Posterior cingulate gyrus (tissue), 11 donors: ENCODE measurements at regions of chr18 and their contacts with region 1.

Region 1: DNA sequence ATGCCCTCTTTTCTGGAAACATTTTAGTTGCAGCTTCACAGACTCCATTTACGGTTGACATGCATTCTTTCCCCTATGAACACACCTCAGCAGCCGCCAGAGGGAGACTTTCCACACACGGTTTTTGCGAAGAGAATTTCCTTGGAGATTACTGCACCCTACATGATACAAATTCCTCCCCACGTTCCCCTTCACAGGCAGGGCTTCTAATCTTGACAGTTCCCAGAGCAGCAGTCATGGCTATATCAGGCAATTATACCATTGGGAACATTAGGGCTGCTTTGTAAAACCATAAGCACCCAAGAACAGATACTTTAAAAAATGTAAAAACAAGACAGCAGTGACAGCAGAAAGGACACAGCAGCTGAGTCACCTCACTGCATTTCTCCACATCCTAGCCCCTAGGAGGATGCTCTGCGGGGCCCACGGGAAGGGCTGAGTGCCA is 253.8 kb downstream of the TGIF1 start:
- DNase-seq: peak; percentile 41 to 93 (median 70)

Region 2: GRCh38 chr18:3321133-3321812 is 382.5 kb before region 1 on chr18:
- intact Hi-C with region 1: no loop called
- DNase-seq: no peak

Region 3: DNA sequence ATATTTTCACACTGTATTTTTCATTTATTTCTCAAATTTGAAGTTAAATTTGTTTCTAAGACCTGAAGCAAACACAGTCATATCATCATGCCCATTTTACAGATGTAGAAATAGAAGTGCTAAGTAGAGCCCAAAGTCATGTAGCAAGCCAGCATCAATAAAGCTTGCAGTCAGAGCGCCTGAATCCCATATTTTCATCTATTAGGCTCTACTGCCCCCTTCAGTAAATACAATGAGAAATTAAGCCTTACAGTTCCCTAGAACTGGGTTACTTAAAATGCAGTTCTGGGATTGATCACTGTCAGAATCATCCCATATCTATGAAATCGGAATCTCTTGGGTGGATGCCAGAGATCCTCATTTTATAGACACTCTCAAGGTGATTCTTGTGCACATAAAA is 166.1 kb after region 1 on chr18:
- intact Hi-C with region 1: loop called (anchors 2 kb)
- DNase-seq: no peak

Region 4: GRCh38 chr18:3995476-3996102 is 291.8 kb after region 1 on chr18:
- intact Hi-C with region 1: loop called (anchors 5 kb)
- DNase-seq: peak in 6 of 10 donors; percentile 39 to 81 (median 49)